ENCODE measurements at regions of chr1 and their contacts with region 1.

Region 1: DNA sequence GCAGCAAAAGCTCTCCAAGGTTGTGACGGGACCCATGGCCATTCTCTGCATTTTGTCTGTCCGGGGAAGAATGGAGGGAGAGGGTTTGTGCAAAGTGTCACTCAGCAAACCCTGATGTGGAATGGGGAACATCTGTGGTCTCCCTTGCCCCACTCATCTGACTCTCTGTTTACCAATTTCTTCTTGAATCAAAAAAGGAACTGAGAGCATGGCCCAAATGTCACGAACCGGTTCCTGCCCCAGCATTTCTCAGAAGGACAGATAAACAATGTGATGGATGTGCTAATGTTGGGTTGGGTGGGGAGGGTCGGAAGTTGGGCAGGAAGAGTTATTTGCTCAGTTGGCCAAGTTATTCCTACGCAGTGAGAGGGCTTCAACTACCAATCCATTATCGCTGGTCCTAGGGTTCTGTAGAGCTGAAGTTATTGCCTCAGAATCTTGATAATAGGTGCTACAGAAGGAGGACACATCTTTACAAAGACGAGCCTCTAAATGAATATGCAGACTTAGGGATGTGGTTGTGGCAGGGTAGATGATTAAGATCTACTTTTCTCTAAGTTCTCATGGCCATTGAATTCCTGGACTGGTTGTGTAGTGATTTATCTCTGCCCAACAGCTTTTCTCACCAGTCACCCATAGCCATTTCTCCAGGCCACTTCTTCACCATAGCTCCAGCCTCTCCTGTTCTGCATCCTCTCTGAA is 9.6 kb upstream of the DUSP12 start:
- DNase-seq: peak in 1 of 2 donors; percentile 12
- ATAC-seq: peak in 6 of 8 donors; percentile 41 to 59 (median 45)
- H3K4me3 ChIP-seq: no peak overlapping the region
- H3K27ac ChIP-seq: peak overlapping the region in 2 of 10 donors; percentile 26 to 86
- H3K4me1 ChIP-seq: peaks cover 0 to 46% (median 0%) of the 10 kb centered on the region in 9 donors
- H3K27me3 ChIP-seq: peaks cover 0 to 9% (median 0%) of the 10 kb centered on the region in 7 donors
- CTCF ChIP-seq: no peak

Region 2: GRCh38 chr1:161330346-161330745 is 409.7 kb before region 1 on chr1:
- intact Hi-C with region 1: no loop called
- DNase-seq: no peak
- ATAC-seq: no peak
- H3K4me3 ChIP-seq: no peak overlapping the region
- H3K27ac ChIP-seq: no peak overlapping the region
- H3K4me1 ChIP-seq: no peaks in the 10 kb centered on the region
- H3K27me3 ChIP-seq: no peaks in the 10 kb centered on the region
- CTCF ChIP-seq: no peak

Region 3: GRCh38 chr1:161486806-161487741 is 252.9 kb before region 1 on chr1:
- intact Hi-C with region 1: loop called (anchors 1 to 10 kb)
- DNase-seq: peak; percentile 35 to 45
- ATAC-seq: peak in 7 of 8 donors; percentile 67 to 87 (median 78)
- H3K4me3 ChIP-seq: peak overlapping the region in 4 of 10 donors; percentile 12 to 35 (median 20)
- H3K27ac ChIP-seq: no peak overlapping the region
- H3K4me1 ChIP-seq: peaks cover 0 to 24% (median 0%) of the 10 kb centered on the region in 9 donors
- H3K27me3 ChIP-seq: peaks cover 0 to 69% (median 44%) of the 10 kb centered on the region in 7 donors
- CTCF ChIP-seq: peak; percentile 46 to 79 (median 73)

Measured in heart right ventricle (tissue), 16 donors.